ENCODE measurements at regions of chr15 and their contacts with region 1.

Region 1: GRCh38 chr15:74470631-74471395 is 9.9 kb upstream of the UBL7 start:
- DNase-seq: peak; percentile 76 to 91
- ATAC-seq: peak; percentile 91
- H3K4me3 ChIP-seq: peak overlapping the region in 3 of 4 donors; percentile 3 to 25 (median 23)
- H3K27ac ChIP-seq: peak overlapping the region; percentile 82 to 89 (median 86)
- H3K4me1 ChIP-seq: peaks cover 6 to 10% of the 10 kb centered on the region in 2 donors
- H3K27me3 ChIP-seq: no peaks in the 10 kb centered on the region
- CTCF ChIP-seq: peak in 1 of 5 experiments; percentile 6
- POLR2A ChIP-seq: peak; percentile 35 to 51

Region 2: GRCh38 chr15:74433592-74434262 is 37.1 kb before region 1 on chr15 and contains the start of gene SEMA7A:
- in situ Hi-C with region 1: no loop called
- intact Hi-C with region 1: loop called (anchors 5 kb)
- DNase-seq: peak; percentile 62 to 77
- ATAC-seq: peak; percentile 76 to 84
- H3K4me3 ChIP-seq: peak within 1 kb of the TSS; percentile 61 to 84 (median 72)
- H3K27ac ChIP-seq: peak within 1 kb of the TSS; percentile 50 to 73 (median 68)
- H3K4me1 ChIP-seq: peaks cover 0 to 9% of the 10 kb centered on the region in 2 donors
- H3K27me3 ChIP-seq: peaks cover 0 to 18% (median 7%) of the 10 kb centered on the region in 3 donors
- CTCF ChIP-seq: peak in 2 of 5 experiments; percentile 12 to 13
- POLR2A ChIP-seq: peak; percentile 77 to 79
- total RNA-seq, gene SEMA7A: 0.51 to 2.7 (median 2.4) TPM

Measured in gastrocnemius medialis (tissue), 4 donors.